ENCODE measurements at regions of chr15 and their contacts with region 1.

Region 1: GRCh38 chr15:90086868-90087268 is 15.4 kb downstream of the IDH2 start:
- DNase-seq: peak in 1 of 10 donors; percentile 39
- H3K4me3 ChIP-seq: no peak overlapping the region
- H3K27ac ChIP-seq: peak overlapping the region in 21 of 59 donors; percentile 4 to 70 (median 42)
- H3K27me3 ChIP-seq: no peaks in the 10 kb centered on the region
- CTCF ChIP-seq: peak in 55 of 56 donors; percentile 27 to 68 (median 57)

Region 2: GRCh38 chr15:89760303-89761008 is 326.4 kb before region 1 on chr15:
- intact Hi-C with region 1: loop called in 1 of 2 experiments (anchors 5 kb)
- DNase-seq: peak in 9 of 10 donors; percentile 38 to 82 (median 74)
- H3K4me3 ChIP-seq: no peak overlapping the region
- H3K27ac ChIP-seq: no peak overlapping the region
- H3K27me3 ChIP-seq: no peaks in the 10 kb centered on the region
- CTCF ChIP-seq: peak; percentile 64 to 97 (median 91)

Region 3: GRCh38 chr15:90071208-90071807 is 15.6 kb before region 1 on chr15:
- intact Hi-C with region 1: no loop called
- DNase-seq: peak in 9 of 10 donors; percentile 37 to 86 (median 76)
- H3K4me3 ChIP-seq: no peak overlapping the region
- H3K27ac ChIP-seq: peak overlapping the region in 31 of 59 donors; percentile 1 to 65 (median 32)
- H3K27me3 ChIP-seq: no peaks in the 10 kb centered on the region
- CTCF ChIP-seq: peak; percentile 61 to 92 (median 82)

Region 4: GRCh38 chr15:90114451-90114901 is 27.6 kb after region 1 on chr15:
- intact Hi-C with region 1: no loop called
- DNase-seq: peak in 1 of 10 donors; percentile 9
- H3K4me3 ChIP-seq: no peak overlapping the region
- H3K27ac ChIP-seq: no peak overlapping the region
- H3K27me3 ChIP-seq: no peaks in the 10 kb centered on the region
- CTCF ChIP-seq: no peak